HepG2 (cell line): ENCODE measurements at regions of chr16 and their contacts with region 1.

Region 1: GRCh38 chr16:3059000-3059722 is 6.3 kb upstream of the IL32 start:
- DNase-seq: peak; percentile 71
- ATAC-seq: peak; percentile 87
- H3K4me3 ChIP-seq: peak overlapping the region; percentile 74 to 91 (median 90); a peak in 5 of 6 replicates
- H3K27ac ChIP-seq: peak overlapping the region; percentile 55
- H3K4me1 ChIP-seq: peaks cover 14% of the 10 kb centered on the region
- H3K27me3 ChIP-seq: no peaks in the 10 kb centered on the region
- CTCF ChIP-seq: peak; percentile 88
- EP300 ChIP-seq: no peak
- POLR2A ChIP-seq: peak; percentile 34 to 84; a peak in 3 of 4 replicates
- RAD21 ChIP-seq: peak; percentile 98

Region 2: GRCh38 chr16:3023669-3024478 is 35.3 kb before region 1 on chr16 and contains the starts of genes HCFC1R1 and THOC6:
- CTCF ChIA-PET with region 1: no interaction called
- POLR2A ChIA-PET with region 1: interaction called, 16 read pairs
- in situ Hi-C with region 1: no loop called
- intact Hi-C with region 1: no loop called
- DNase-seq: peak; percentile 96
- ATAC-seq: peak; percentile 66
- H3K4me3 ChIP-seq: peak within 1 kb of the TSS; percentile 62 to 93 (median 65)
- H3K27ac ChIP-seq: peak within 1 kb of the TSS; percentile 93
- H3K4me1 ChIP-seq: peaks cover 50% of the 10 kb centered on the region
- H3K27me3 ChIP-seq: peaks cover 0 to 4% of the 10 kb centered on the region in 2 experiments; a peak in 3 of 5 replicates
- CTCF ChIP-seq: peak; percentile 42; the same call in 1 of the 2 replicates
- EP300 ChIP-seq: no peak
- POLR2A ChIP-seq: peak; percentile 81 to 93
- RAD21 ChIP-seq: no peak; the same call in none of the 2 replicates
- total RNA-seq, gene HCFC1R1: 8.3 and 16.1 TPM in 2 replicates
- total RNA-seq, gene THOC6: 37.0 TPM in 2 replicates

Region 3: GRCh38 chr16:3074860-3075522 is 15.8 kb after region 1 on chr16:
- CTCF ChIA-PET with region 1: no interaction called
- POLR2A ChIA-PET with region 1: interaction called, 30 read pairs
- in situ Hi-C with region 1: no loop called
- intact Hi-C with region 1: no loop called
- DNase-seq: no peak
- ATAC-seq: no peak
- H3K4me3 ChIP-seq: no peak overlapping the region
- H3K27ac ChIP-seq: no peak overlapping the region
- H3K4me1 ChIP-seq: peaks cover 9% of the 10 kb centered on the region
- H3K27me3 ChIP-seq: peaks cover 2 to 16% of the 10 kb centered on the region in 2 experiments; a peak in 3 of 5 replicates
- CTCF ChIP-seq: no peak
- EP300 ChIP-seq: no peak
- POLR2A ChIP-seq: no peak
- RAD21 ChIP-seq: no peak

Region 4: GRCh38 chr16:3087243-3088235 is 28.4 kb after region 1 on chr16:
- CTCF ChIA-PET with region 1: interaction called, 7 read pairs
- POLR2A ChIA-PET with region 1: interaction called, 38 read pairs
- in situ Hi-C with region 1: no loop called
- intact Hi-C with region 1: loop called (anchors 1 kb)
- DNase-seq: no peak
- ATAC-seq: peak; percentile 84
- H3K4me3 ChIP-seq: peak overlapping the region; percentile 51 to 79 (median 63)
- H3K27ac ChIP-seq: peak overlapping the region; percentile 59
- H3K4me1 ChIP-seq: peaks cover 46% of the 10 kb centered on the region
- H3K27me3 ChIP-seq: peaks cover 0 to 5% of the 10 kb centered on the region in 2 experiments; a peak in 2 of 5 replicates
- CTCF ChIP-seq: peak; percentile 89
- EP300 ChIP-seq: no peak
- POLR2A ChIP-seq: no peak
- RAD21 ChIP-seq: peak; percentile 36

Region 5: DNA sequence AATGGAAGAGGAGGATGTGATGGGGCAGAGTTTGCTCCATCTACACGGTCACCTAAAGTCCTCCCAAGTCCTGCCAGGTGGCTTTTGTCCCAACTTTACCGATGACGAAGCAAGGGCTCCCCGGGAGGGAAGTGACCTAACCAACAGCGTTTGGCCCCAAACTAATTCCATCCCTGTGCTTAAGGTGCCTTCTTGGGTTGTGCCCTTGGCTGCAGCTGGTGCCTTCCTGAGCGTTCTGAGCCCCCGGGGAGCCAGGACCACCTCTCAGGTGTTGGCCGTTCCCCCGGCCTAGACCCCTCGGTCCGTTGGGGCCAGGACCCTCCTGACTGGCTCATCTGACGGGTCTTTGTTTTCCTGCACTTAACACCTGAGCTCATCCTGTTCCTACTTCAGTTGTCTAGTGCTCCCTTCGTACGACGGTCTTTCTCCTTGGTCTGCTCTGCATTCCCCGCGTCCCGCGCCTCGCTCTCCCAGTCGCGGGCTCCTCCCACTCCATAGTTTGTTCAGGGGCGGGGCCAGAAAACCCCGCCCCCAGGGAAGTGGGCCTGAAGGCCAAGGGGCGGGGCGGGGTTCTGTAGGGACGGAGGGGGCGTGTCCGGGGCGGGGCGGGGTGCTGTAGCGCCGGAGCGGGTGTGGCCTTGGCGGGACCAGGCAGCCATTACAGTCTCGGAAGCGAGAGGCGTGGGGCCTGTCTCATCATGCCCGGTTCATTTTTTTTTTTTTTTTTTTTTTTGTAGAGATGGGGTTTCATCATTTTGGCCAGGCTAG is 40.8 kb after region 1 on chr16:
- CTCF ChIA-PET with region 1: interaction called, 8 read pairs
- POLR2A ChIA-PET with region 1: interaction called, 13 read pairs
- in situ Hi-C with region 1: no loop called
- intact Hi-C with region 1: loop called (anchors 2 kb)
- DNase-seq: peak; percentile 81
- ATAC-seq: peak; percentile 75
- H3K4me3 ChIP-seq: peak overlapping the region in 2 of 3 experiments; percentile 5 to 62; a peak in 2 of 6 replicates
- H3K27ac ChIP-seq: no peak overlapping the region
- H3K4me1 ChIP-seq: peaks cover 59% of the 10 kb centered on the region
- H3K27me3 ChIP-seq: peaks cover 0 to 13% of the 10 kb centered on the region in 2 experiments; a peak in 2 of 5 replicates
- CTCF ChIP-seq: no peak
- EP300 ChIP-seq: no peak
- POLR2A ChIP-seq: peak in 1 of 2 experiments; percentile 58; a peak in 1 of 4 replicates
- RAD21 ChIP-seq: no peak

Region 6: GRCh38 chr16:3112058-3112880 is 53.1 kb after region 1 on chr16 and contains the start of gene ZNF205:
- CTCF ChIA-PET with region 1: no interaction called
- POLR2A ChIA-PET with region 1: interaction called, 10 read pairs
- in situ Hi-C with region 1: no loop called
- intact Hi-C with region 1: no loop called
- DNase-seq: peak; percentile 70
- ATAC-seq: peak; percentile 97
- H3K4me3 ChIP-seq: peak within 1 kb of the TSS; percentile 77 to 98 (median 81)
- H3K27ac ChIP-seq: peak within 1 kb of the TSS; percentile 30
- H3K4me1 ChIP-seq: peaks cover 28% of the 10 kb centered on the region
- H3K27me3 ChIP-seq: no peaks in the 10 kb centered on the region
- CTCF ChIP-seq: peak; percentile 47
- EP300 ChIP-seq: 0 out of 4 replicates have a peak, but pooled peaks have one; percentile 5 to 21
- POLR2A ChIP-seq: peak; percentile 46 to 58; a peak in 3 of 4 replicates
- RAD21 ChIP-seq: peak; percentile 41; the same call in 1 of the 2 replicates
- total RNA-seq, gene ZNF205: 6.7 and 10.2 TPM in 2 replicates

Region 7: DNA sequence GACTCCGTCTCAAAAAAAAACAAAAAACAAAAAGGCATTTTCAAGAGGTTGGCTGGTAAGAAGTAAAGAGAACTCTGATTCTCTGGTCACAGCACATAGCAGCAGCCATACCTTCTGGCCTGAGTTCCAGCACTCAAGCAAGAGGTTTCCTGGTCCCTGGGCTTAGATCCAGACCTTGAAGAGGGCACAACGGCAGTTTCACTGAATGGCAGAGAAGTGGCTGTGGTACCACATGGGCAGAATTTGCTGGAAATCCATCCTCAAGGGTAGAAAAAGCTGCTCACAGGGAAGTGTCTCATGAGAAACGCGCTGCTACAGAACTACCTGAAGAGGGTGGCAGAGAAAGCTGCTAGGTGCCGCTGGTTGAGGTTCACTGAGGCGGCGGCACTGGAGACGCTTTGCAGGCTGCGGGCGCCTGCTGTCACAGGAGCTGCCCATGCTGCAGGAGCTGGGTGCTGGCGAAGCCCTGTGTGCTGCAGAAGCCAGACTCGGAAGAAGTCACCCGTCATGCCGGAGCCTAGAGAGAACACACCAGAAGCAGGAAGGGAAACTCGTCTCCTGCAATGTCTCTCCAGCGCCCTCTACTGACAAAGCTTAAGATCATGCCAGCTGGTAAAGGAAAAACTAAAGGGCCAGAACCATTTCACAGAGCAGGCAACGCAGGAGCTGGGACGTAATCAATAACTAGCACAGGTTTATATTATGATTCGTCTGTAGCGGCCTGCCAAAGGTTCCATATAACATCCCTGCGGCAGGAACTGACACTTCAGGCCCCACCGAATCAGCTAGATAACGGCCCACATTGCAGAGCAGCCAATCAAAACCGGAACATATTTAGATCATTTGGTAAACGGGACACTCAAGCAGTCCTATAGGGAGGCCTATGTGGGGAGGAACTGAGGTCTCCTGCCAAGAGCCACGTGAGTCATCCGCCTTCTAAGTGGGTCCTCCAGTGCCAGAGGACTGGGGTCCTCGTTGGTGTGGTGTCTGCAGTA is 70.3 kb after region 1 on chr16:
- CTCF ChIA-PET with region 1: no interaction called
- POLR2A ChIA-PET with region 1: interaction called, 17 read pairs
- in situ Hi-C with region 1: no loop called
- intact Hi-C with region 1: loop called (anchors 2 kb)
- DNase-seq: peak; percentile 82
- ATAC-seq: peak; percentile 44
- H3K4me3 ChIP-seq: peak overlapping the region; percentile 25 to 67 (median 47); a peak in 5 of 6 replicates
- H3K27ac ChIP-seq: no peak overlapping the region
- H3K4me1 ChIP-seq: peaks cover 46% of the 10 kb centered on the region
- H3K27me3 ChIP-seq: no peaks in the 10 kb centered on the region; a peak in 1 of 5 replicates
- CTCF ChIP-seq: peak; percentile 88
- EP300 ChIP-seq: no peak
- POLR2A ChIP-seq: peak in 1 of 2 experiments; percentile 39; a peak in 1 of 4 replicates
- RAD21 ChIP-seq: peak; percentile 72